ENCODE measurements at regions of chr14 and their contacts with region 1.

Region 1: DNA sequence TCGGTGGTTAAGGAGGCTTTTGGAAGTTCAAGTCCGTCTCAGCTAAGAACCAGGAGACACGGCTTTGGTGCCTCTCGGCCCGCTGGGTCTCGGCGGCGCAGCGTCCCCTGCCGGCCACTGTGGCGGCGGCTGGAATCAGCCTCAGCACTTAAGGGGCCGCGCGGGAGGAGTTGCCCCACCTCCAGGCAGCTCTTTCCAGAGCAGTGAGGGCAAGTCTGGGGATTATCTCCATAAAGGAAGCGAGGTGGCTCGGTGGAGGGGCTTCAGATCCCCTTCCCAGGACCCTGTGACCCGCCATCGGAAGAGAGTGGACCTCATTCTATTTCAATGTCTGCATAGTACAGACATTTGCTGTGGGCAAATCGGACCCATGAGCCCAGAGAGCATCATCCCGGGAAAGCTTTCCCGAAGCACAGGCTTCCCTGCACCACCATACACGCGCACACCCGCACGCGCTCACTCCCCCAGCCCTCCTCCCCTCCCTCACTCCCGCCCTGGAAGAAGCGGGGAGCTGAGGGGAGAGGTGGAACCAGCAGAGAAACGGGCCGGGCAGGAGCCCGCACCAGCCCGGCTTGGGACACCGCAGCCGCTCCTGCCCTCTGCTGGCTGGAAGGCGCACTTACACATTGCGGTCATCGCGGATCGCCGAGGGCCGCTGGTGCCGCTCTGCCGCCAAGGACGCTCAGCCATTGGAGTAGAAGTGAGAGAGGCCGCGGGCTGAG is 15.9 kb downstream of the RNASE2 start:
- DNase-seq: peak; percentile 91
- ATAC-seq: peak; percentile 93
- H3K4me3 Mint-ChIP-seq: peak overlapping the region; percentile 89
- H3K27ac Mint-ChIP-seq: peak overlapping the region; percentile 91
- H3K4me1 Mint-ChIP-seq: peaks cover 13% of the 10 kb centered on the region
- H3K27me3 Mint-ChIP-seq: peaks cover 24% of the 10 kb centered on the region
- CTCF ChIP-seq: peak; percentile 67

Region 2: GRCh38 chr14:20427231-20428009 is 543.7 kb before region 1 on chr14:
- CTCF ChIA-PET with region 1: no interaction called
- POLR2A ChIA-PET with region 1: no interaction called
- DNase-seq: no peak
- ATAC-seq: peak; percentile 69
- H3K4me3 Mint-ChIP-seq: no peak overlapping the region
- H3K27ac Mint-ChIP-seq: peak overlapping the region; percentile 28; the same call in 1 of the 2 replicates
- H3K4me1 Mint-ChIP-seq: peaks cover 19% of the 10 kb centered on the region
- H3K27me3 Mint-ChIP-seq: no peaks in the 10 kb centered on the region
- CTCF ChIP-seq: no peak

Region 3: DNA sequence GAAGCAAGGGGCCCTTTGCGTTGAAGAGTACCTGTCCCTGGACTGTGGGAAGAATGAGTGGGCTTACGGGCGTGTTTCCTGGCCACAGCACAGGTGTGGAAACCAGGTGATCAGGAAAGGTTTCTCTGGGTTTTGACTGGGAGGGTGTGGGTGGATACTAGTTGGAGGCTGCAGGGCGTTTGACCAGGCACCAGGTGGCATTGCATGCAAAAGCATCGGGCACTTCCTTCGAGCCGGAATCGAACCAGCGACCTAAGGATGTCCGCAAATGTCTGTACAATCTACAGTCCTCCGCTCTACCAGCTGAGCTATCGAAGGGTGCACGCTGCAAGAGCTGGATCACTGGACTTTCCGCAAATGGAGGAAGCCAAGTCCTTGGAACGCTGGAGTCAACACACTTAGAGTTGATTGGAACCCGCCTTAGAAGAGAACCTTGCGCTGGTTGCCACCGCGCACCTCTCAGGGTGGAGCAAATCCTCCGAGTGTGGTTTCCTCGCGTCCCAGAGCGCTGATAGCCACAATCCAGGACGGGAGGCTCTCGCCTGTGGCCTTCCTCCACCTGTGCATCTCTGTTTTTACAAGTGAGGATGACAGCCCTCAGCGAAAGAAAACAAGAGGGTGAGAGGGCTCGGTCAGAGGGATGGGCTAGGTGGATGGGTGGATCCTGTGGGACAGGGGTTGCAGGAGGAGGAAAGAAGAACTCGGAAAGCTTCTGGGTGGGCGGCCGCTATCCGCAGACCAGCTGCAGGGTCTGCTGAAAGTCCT is 308.0 kb before region 1 on chr14:
- CTCF ChIA-PET with region 1: interaction called, 12 read pairs
- POLR2A ChIA-PET with region 1: no interaction called
- DNase-seq: peak; percentile 94
- ATAC-seq: peak; percentile 77
- H3K4me3 Mint-ChIP-seq: peak overlapping the region; percentile 99
- H3K27ac Mint-ChIP-seq: no peak overlapping the region
- H3K4me1 Mint-ChIP-seq: peaks cover 10% of the 10 kb centered on the region
- H3K27me3 Mint-ChIP-seq: peaks cover 51% of the 10 kb centered on the region
- CTCF ChIP-seq: no peak; the same call in 1 of the 2 replicates

Region 4: DNA sequence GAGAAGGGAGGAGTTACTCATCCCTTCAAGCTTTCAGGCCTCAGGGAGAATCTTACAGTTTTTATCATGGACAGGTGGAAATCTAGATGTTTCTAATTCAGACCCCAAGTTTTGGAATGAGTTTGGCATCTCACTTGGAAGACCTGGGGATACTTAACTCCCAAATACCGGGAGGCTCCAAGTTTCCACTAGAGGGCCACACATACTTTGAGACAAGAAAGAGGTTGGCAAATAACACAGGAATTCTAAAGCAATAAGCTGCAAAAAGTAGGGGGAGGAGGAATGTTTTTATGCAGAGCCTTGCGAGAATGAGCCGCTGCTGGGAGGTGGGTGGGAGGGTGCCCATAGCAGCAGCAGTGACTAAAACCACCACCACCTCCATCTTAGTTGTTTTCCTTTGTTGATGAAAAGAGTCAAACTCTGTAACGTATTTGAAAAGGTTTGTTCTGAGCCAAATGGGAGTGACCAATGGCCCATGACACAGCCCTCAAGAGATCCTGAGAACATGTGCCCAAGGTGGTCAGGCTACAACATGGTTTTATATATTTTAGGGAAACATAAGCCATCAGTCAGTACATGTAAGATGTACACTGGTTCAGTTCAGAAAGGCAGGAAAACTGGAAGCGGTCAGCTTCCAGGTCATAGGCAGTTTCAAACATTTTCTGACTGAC is 134.3 kb before region 1 on chr14:
- CTCF ChIA-PET with region 1: interaction called, 26 read pairs
- POLR2A ChIA-PET with region 1: no interaction called
- DNase-seq: peak; percentile 51
- ATAC-seq: peak; percentile 80
- H3K4me3 Mint-ChIP-seq: no peak overlapping the region
- H3K27ac Mint-ChIP-seq: peak overlapping the region; percentile 65; the same call in 1 of the 2 replicates
- H3K4me1 Mint-ChIP-seq: peaks cover 9% of the 10 kb centered on the region
- H3K27me3 Mint-ChIP-seq: no peaks in the 10 kb centered on the region
- CTCF ChIP-seq: no peak

Region 5: DNA sequence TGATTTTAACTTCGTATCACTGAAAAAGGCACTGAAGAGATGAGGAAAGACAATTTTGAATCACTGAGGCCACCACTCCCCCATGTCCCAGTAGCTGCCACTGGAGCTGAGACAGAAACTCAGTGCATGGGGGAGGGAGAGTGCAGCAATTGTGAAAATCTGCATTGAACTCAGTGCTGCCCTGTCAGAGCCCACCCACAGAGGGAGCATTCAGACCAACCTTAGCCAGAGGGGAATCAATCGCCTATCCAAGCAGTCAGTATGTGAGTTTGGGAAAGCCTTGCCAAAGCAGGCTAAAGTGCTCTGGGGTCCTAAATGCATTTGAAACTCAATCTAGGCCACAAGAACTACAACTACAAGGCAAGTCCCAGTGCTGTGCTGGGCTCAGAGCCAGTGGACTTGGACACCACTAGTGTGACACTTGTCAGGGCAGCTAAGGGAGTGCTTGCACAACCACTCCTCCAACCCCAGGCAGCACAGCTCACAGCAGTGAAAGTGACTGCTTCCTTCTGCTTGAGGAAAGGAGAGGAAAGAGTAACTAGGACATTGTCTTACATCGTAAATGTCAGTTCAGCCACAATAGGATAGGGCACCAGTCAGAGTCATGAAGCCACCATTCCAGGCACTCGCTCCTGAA is 66.6 kb before region 1 on chr14:
- CTCF ChIA-PET with region 1: interaction called, 36 read pairs
- POLR2A ChIA-PET with region 1: no interaction called
- DNase-seq: peak; percentile 59
- ATAC-seq: peak; percentile 98
- H3K4me3 Mint-ChIP-seq: no peak overlapping the region
- H3K27ac Mint-ChIP-seq: peak overlapping the region; percentile 67; the same call in 1 of the 2 replicates
- H3K4me1 Mint-ChIP-seq: peaks cover 9% of the 10 kb centered on the region
- H3K27me3 Mint-ChIP-seq: peaks cover under 1% of the 10 kb centered on the region
- CTCF ChIP-seq: no peak

Region 6: GRCh38 chr14:20989572-20990551 is 18.7 kb after region 1 on chr14 and contains the start of gene METTL17:
- CTCF ChIA-PET with region 1: interaction called, 13 read pairs
- POLR2A ChIA-PET with region 1: no interaction called
- DNase-seq: peak; percentile 82
- ATAC-seq: peak; percentile 96
- H3K4me3 Mint-ChIP-seq: peak within 1 kb of the TSS; percentile 89
- H3K27ac Mint-ChIP-seq: peak within 1 kb of the TSS; percentile 91; the same call in 1 of the 2 replicates
- H3K4me1 Mint-ChIP-seq: peaks cover 17% of the 10 kb centered on the region
- H3K27me3 Mint-ChIP-seq: no peaks in the 10 kb centered on the region; the same call in 1 of the 2 replicates
- CTCF ChIP-seq: no peak
- total RNA-seq, gene METTL17: 79.5 to 98.1 TPM (median 90.8 TPM) in 3 replicates

Region 7: GRCh38 chr14:21024585-21025370 is 53.6 kb after region 1 on chr14 and contains the start of gene NDRG2:
- CTCF ChIA-PET with region 1: interaction called, 11 read pairs
- POLR2A ChIA-PET with region 1: interaction called, 3 read pairs
- DNase-seq: peak; percentile 92
- ATAC-seq: peak; percentile 74
- H3K4me3 Mint-ChIP-seq: peak within 1 kb of the TSS; percentile 93
- H3K27ac Mint-ChIP-seq: peak within 1 kb of the TSS; percentile 99
- H3K4me1 Mint-ChIP-seq: peaks cover 39% of the 10 kb centered on the region
- H3K27me3 Mint-ChIP-seq: peaks cover 35% of the 10 kb centered on the region
- CTCF ChIP-seq: no peak
- total RNA-seq, gene NDRG2: 28.5 to 32.2 TPM (median 30.1 TPM) in 3 replicates

Region 8: GRCh38 chr14:21103710-21104447 is 132.7 kb after region 1 on chr14:
- CTCF ChIA-PET with region 1: interaction called, 12 read pairs
- POLR2A ChIA-PET with region 1: no interaction called
- DNase-seq: peak; percentile 96
- ATAC-seq: peak; percentile 79
- H3K4me3 Mint-ChIP-seq: peak overlapping the region; percentile 93
- H3K27ac Mint-ChIP-seq: peak overlapping the region; percentile 87
- H3K4me1 Mint-ChIP-seq: peaks cover 73% of the 10 kb centered on the region
- H3K27me3 Mint-ChIP-seq: no peaks in the 10 kb centered on the region
- CTCF ChIP-seq: peak; percentile 24; the same call in 1 of the 2 replicates